Endothelial cell of umbilical vein (primary cell): ENCODE measurements at regions of chr19 and their contacts with region 1.

Region 1: GRCh38 chr19:12672744-12673143 is 6.1 kb downstream of the WDR83 start:
- DNase-seq: no peak
- H3K4me3 ChIP-seq: no peak overlapping the region
- H3K27ac ChIP-seq: no peak overlapping the region
- H3K4me1 ChIP-seq: peaks cover 15% of the 10 kb centered on the region
- H3K27me3 ChIP-seq: no peaks in the 10 kb centered on the region
- CTCF ChIP-seq: no peak
- POLR2A ChIP-seq: no peak

Region 2: GRCh38 chr19:12055783-12056182 is 617.0 kb before region 1 on chr19:
- CTCF ChIA-PET with region 1: interaction called, 9 read pairs
- POLR2A ChIA-PET with region 1: no interaction called
- dilution Hi-C with region 1: no loop called
- intact Hi-C with region 1: loop called (anchors 1 kb)
- DNase-seq: no peak
- H3K4me3 ChIP-seq: no peak overlapping the region
- H3K27ac ChIP-seq: no peak overlapping the region
- H3K4me1 ChIP-seq: peaks cover 10% of the 10 kb centered on the region
- H3K27me3 ChIP-seq: no peaks in the 10 kb centered on the region
- CTCF ChIP-seq: no peak
- POLR2A ChIP-seq: no peak

Region 3: GRCh38 chr19:12092065-12092867 is 580.5 kb before region 1 on chr19:
- CTCF ChIA-PET with region 1: interaction called, 14 read pairs
- POLR2A ChIA-PET with region 1: no interaction called
- dilution Hi-C with region 1: no loop called
- intact Hi-C with region 1: no loop called
- DNase-seq: peak; percentile 71
- H3K4me3 ChIP-seq: peak overlapping the region; percentile 33 to 49 (median 44)
- H3K27ac ChIP-seq: no peak overlapping the region
- H3K4me1 ChIP-seq: peaks cover 3% of the 10 kb centered on the region
- H3K27me3 ChIP-seq: no peaks in the 10 kb centered on the region
- CTCF ChIP-seq: no peak
- POLR2A ChIP-seq: peak; percentile 47

Region 4: DNA sequence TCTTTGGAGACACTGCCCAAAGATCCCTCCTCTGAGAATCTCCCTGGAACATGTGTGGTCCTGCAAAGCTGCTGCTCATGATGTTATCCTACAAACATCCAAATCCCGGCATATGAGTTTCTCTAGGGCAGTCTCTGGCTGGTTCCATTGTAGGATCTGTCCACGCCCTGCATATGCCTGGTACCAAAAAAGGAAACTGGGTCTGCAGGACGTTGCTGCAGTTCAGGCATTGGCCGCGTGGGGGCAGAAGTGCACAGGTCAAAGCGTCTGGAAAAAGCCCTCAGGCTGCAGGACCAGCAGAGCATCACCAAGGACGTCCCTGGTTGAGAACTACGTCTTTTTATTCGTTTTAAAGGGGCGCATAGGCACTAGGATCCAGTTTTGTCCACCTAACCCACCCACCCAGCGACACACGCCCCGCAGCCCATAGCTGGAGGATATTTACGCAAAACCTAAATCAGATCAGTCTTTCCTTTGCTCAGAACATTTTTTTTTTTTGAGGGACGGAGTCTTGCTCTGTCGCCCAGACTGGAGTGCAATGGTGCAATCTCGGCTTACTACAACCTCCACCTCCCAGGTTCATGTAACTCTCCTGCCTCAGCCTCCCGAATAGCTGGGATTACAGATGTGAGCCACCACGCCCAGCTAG is 108.6 kb before region 1 on chr19:
- CTCF ChIA-PET with region 1: interaction called, 13 read pairs
- POLR2A ChIA-PET with region 1: no interaction called
- dilution Hi-C with region 1: no loop called
- intact Hi-C with region 1: loop called (anchors 1 kb)
- DNase-seq: peak; percentile 85
- H3K4me3 ChIP-seq: no peak overlapping the region
- H3K27ac ChIP-seq: no peak overlapping the region
- H3K4me1 ChIP-seq: no peaks in the 10 kb centered on the region
- H3K27me3 ChIP-seq: no peaks in the 10 kb centered on the region
- CTCF ChIP-seq: peak; percentile 91 to 98
- POLR2A ChIP-seq: no peak

Region 5: DNA sequence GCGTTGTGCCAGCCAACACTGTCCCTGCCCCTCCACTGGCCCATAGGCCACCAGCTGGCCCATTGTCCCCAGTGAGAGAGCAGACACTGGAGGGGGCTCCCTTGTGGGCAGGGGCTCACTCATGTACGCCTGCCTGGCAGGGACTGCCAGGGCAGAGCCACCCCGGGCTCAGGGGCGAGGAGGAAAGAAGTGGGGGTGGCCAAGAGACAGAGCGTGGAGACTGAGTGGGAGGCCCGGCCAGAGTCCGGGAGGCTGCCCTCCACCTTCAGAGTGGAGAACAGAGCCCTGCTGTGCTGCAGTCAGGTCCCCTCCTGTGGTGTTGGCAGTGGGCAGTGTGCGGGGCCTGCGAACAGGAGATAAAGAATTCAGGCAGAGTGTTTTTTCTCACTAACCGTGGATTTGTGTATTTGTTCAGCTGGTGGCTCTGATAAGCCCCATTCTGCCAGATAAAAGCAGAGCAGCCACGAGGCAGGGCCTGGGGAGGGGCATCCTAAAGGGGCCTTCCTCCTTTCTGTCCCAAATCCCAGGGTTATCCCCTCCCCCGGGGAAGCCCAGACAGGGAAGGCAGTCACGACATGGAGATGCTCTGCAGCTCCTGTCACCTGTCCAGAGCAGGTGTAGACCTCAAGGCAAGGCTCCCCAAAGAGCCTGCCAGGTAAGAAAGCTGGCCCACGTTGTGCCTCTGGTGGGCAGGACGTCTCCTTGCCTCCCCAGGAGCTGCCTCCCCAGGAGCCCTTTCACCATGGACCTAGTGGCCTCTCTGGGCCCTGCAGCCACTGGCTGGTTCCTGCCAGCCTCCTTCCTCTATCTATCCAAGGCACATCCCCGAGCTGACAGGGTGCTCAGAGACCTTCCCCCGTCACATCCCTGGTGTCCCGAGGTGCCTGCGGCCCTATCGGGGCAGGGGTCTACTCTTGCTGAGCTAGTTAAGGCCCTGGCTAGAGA is 396.9 kb after region 1 on chr19:
- CTCF ChIA-PET with region 1: no interaction called
- POLR2A ChIA-PET with region 1: no interaction called
- dilution Hi-C with region 1: no loop called
- intact Hi-C with region 1: no loop called
- DNase-seq: peak; percentile 41
- H3K4me3 ChIP-seq: no peak overlapping the region
- H3K27ac ChIP-seq: no peak overlapping the region
- H3K4me1 ChIP-seq: no peaks in the 10 kb centered on the region
- H3K27me3 ChIP-seq: no peaks in the 10 kb centered on the region
- CTCF ChIP-seq: peak in 1 of 2 donors; percentile 12
- POLR2A ChIP-seq: no peak